Panc1 (cell line): ENCODE measurements at regions of chr5 and their contacts with region 1.

Region 1: DNA sequence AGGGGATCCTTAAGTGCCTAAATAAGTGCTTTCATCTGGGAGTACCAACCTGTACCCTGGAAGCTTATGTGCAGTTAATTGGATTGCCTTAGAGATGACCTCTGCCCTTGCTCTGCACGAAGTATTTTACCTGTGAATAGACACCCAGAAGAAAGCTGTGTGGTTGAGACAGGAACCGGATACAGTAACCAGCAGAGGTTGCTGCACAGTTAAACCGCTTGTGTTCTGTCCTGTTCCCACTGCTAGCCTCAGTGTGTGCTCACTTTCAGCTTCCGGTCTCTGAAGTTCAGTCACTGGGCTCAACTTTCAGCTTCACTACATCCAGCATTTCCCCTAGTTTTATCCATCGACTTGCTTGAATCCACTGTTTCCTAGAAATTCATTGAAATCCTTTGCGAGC is 185.3 kb downstream of the FAM170A start:
- DNase-seq: no peak
- ATAC-seq: no peak
- H3K4me3 ChIP-seq: no peak overlapping the region
- H3K27ac ChIP-seq: no peak overlapping the region
- H3K4me1 ChIP-seq: no peaks in the 10 kb centered on the region
- H3K27me3 ChIP-seq: no peaks in the 10 kb centered on the region
- CTCF ChIP-seq: no peak

Region 2: GRCh38 chr5:119828541-119828940 is 13.9 kb after region 1 on chr5:
- CTCF ChIA-PET with region 1: interaction called, 14 read pairs
- POLR2A ChIA-PET with region 1: no interaction called
- in situ Hi-C with region 1: no loop called
- intact Hi-C with region 1: no loop called
- DNase-seq: no peak
- ATAC-seq: no peak
- H3K4me3 ChIP-seq: no peak overlapping the region
- H3K27ac ChIP-seq: no peak overlapping the region
- H3K4me1 ChIP-seq: no peaks in the 10 kb centered on the region
- H3K27me3 ChIP-seq: no peaks in the 10 kb centered on the region
- CTCF ChIP-seq: no peak